Gastrocnemius medialis (tissue), 4 donors: ENCODE measurements at regions of chr17 and their contacts with region 1.

Region 1: GRCh38 chr17:81309070-81309905 is 14.2 kb upstream of the SLC38A10 start:
- DNase-seq: peak; percentile 87 to 94
- ATAC-seq: peak; percentile 95 to 99
- H3K4me3 ChIP-seq: peak overlapping the region; percentile 50 to 65 (median 54)
- H3K27ac ChIP-seq: peak overlapping the region; percentile 79 to 88 (median 86)
- H3K4me1 ChIP-seq: peaks cover 19 to 24% of the 10 kb centered on the region in 2 donors
- H3K27me3 ChIP-seq: no peaks in the 10 kb centered on the region
- CTCF ChIP-seq: peak; percentile 69 to 83 (median 72)
- POLR2A ChIP-seq: peak; percentile 57 to 75

Region 2: DNA sequence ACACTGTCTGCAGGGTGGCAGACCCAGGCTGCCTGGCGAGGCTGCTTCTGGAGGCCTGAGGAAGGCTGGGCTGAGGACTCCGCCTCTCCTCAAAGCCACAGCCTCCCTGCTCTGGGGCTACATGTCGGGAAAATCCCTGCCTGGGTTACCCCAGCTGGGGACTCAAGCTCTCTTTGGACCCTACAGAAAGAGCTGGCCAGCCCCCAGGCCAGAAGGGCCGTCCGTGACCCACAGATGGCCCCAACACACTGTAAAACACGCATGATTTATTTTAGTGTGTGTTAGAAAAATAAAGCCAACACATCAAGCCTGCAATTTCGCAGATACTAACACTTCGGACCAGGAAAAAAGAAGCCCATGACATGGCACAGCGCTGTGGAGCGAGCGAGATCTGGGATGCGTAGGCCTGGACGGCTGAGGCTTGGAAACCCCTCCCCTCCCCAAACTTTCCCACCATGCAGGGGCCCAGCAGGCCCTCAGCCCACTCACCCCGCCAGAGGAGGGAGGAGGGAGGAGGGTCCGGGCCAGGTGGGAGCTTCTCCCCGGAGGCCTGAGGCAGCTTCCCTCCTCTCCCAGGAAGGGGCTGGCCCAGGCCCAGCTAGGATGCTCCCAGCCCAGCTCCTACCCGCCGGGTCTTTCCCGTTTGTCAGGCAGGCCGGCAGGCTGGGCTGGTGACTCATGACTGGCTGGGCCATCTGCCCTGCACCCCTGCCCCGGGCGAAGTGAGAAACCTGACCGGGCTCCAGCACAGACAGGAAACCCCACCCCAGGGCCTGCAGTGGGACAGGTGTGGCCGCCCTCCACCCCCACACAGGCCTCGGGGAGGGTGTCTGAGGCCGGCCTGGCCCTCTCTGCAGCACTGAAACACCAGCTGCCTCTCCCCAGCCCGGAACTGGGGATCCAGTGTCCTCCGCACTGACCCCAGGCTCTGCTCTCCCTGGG is 20.0 kb after region 1 on chr17:
- in situ Hi-C with region 1: no loop called
- intact Hi-C with region 1: loop called (anchors 1 kb)
- DNase-seq: peak; percentile 97 to 99
- ATAC-seq: peak; percentile 37 to 44
- H3K4me3 ChIP-seq: peak overlapping the region; percentile 2 to 43 (median 34)
- H3K27ac ChIP-seq: peak overlapping the region; percentile 90 to 98 (median 96)
- H3K4me1 ChIP-seq: peaks cover 54 to 62% of the 10 kb centered on the region in 2 donors
- H3K27me3 ChIP-seq: no peaks in the 10 kb centered on the region
- CTCF ChIP-seq: no peak
- POLR2A ChIP-seq: peak; percentile 63 to 76

Region 3: GRCh38 chr17:81346090-81346907 is 37.0 kb after region 1 on chr17:
- in situ Hi-C with region 1: no loop called
- intact Hi-C with region 1: loop called (anchors 1 kb)
- DNase-seq: peak; percentile 98
- ATAC-seq: peak; percentile 53 to 59
- H3K4me3 ChIP-seq: peak overlapping the region; percentile 52 to 78 (median 70)
- H3K27ac ChIP-seq: peak overlapping the region; percentile 81 to 99 (median 94)
- H3K4me1 ChIP-seq: peaks cover 12 to 18% of the 10 kb centered on the region in 2 donors
- H3K27me3 ChIP-seq: no peaks in the 10 kb centered on the region
- CTCF ChIP-seq: no peak
- POLR2A ChIP-seq: peak; percentile 95

Region 4: GRCh38 chr17:81387100-81388090 is 78.1 kb after region 1 on chr17:
- in situ Hi-C with region 1: no loop called
- intact Hi-C with region 1: loop called (anchors 2 kb)
- DNase-seq: peak in 1 of 2 donors; percentile 59
- ATAC-seq: peak; percentile 43 to 53
- H3K4me3 ChIP-seq: peak overlapping the region; percentile 80 to 96 (median 85)
- H3K27ac ChIP-seq: peak overlapping the region; percentile 93 to 99 (median 98)
- H3K4me1 ChIP-seq: peaks cover 35 to 45% of the 10 kb centered on the region in 2 donors
- H3K27me3 ChIP-seq: no peaks in the 10 kb centered on the region
- CTCF ChIP-seq: peak in 1 of 5 experiments; percentile 17
- POLR2A ChIP-seq: peak; percentile 35 to 72